Left ventricle myocardium superior (tissue), 1 donor: ENCODE measurements at regions of chr6 and their contacts with region 1.

Region 1: DNA sequence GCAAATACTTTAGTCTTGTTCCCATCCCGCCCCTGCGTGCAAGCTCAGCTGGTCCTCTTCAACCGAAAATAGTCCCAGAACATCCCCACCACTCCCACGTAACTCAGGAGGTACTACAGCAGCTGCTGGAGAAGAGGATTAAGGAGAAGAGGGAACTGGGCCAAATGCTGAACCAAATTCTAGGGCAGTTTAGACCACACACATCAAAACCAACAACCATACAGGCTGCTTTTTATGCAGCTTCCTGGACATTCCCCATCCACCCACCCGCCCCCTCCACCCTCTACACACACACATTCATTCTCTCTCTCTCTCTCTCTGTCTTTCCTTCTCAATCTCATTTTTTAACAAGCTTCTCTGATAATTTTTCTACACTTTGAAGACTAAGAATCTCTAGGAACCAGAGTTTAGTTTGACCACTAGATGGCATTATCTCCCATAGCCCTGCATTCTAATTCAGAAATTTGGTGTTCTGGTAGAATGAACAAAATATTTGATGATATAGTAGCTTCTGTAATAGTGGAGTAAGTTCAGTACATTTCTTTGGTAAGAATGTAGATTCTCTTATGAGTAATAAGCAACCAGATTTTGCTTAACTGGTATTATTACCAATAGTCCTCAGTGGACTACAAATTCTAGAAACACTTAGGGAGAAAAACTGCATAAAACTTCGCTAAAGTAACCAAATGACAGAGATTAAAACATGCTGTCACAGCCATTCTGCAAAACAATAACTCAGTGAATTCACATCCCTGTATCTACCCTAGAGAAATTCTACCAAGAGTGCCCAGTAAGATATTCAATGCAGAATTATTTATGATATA is 52.1 kb upstream of the BEND6 start:
- DNase-seq: no peak
- ATAC-seq: peak; percentile 56

Region 2: DNA sequence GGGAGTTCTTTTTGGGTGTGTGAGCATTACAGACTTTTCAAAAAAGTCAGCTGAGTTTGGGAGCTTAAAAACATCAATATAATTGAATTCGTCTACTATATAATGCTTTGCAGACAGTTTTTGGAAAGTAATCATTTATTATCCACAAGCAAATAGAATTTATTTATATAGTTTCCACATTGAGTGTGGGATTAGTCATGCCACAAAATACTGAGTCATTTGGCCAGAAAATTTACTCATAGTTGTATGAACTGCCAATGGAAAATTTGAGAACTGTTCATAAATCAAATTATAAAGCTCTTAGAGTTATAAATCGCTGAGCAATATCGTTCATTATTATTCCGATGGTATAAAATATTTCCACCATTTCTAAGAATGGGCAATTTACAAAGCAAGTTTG is 57.1 kb after region 1 on chr6:
- intact Hi-C with region 1: no loop called
- DNase-seq: no peak
- ATAC-seq: no peak

Region 3: DNA sequence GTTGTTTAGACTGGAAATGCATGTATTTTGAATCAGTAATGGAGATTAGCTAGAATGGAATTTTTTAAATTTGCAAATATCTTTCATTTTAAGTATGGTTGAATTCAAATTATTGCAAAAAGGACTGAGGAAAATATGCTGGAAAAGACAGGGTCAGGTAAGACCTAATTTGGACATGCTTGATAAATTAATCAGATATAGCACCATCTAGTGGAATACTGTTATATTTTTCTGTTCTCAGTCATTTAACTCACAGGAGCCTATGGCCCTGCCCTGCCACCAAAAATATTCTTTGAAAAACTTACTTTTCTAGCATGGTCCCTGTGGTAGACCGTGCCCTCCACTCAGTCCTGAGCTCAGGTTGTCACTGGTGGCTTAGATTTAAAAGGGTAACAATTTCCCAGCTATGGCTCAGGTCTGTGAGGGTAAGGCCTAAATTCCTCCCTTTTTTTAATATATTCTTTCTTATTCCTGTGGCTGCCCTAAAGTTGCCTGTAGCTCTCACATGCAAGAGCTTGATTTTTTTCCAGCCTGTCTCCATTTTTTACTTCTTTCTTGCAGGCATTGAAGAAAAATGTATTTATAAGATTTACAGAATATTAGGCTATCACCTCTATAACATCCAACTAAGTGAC is 118.3 kb after region 1 on chr6:
- intact Hi-C with region 1: loop called (anchors 5 kb)
- DNase-seq: no peak
- ATAC-seq: no peak